Calu3 (cell line): ENCODE measurements at regions of chr18 and their contacts with region 1.

Region 1: GRCh38 chr18:32349728-32350395 is 120.8 kb downstream of the GAREM1 start:
- DNase-seq: peak; percentile 77
- H3K4me3 Mint-ChIP-seq: peak overlapping the region; percentile 56
- H3K27ac Mint-ChIP-seq: peak overlapping the region; percentile 90
- H3K4me1 Mint-ChIP-seq: peaks cover 44% of the 10 kb centered on the region
- H3K27me3 Mint-ChIP-seq: no peaks in the 10 kb centered on the region
- CTCF ChIP-seq: no peak

Region 2: DNA sequence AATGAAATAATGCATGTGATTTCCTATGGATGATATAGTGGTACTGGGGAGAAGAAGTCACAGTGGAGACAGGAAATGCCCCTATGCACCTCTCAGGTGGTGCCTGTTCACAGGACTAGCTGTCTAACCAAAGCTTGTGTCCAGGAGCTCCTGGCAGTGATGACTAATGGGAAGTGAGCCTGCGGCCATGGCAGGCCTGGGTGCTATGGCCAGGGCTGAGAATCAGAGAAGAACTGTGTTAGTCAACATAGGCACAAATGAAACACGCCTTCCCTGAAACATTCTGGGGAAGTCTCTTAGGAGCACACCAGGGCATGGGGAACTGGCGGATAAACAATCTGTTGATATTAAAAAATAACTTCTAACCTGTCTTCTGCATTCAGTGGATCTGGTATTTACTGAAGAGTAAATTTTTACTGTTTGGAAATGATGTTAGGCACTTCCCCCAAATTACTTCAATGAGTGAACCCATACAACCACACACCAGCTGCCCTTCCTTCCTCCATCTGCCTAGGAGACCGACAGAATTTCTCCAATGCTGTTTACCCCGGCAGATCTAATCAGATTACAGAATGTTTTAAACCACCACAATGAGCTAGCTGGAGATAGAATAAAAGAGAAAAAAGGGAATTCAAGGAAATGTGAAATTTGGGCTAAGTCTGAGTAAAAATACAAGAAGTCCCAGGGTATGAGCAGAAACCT is 92.6 kb before region 1 on chr18:
- CTCF ChIA-PET with region 1: no interaction called
- intact Hi-C with region 1: no loop called
- DNase-seq: no peak
- H3K4me3 Mint-ChIP-seq: no peak overlapping the region
- H3K27ac Mint-ChIP-seq: no peak overlapping the region
- H3K4me1 Mint-ChIP-seq: no peaks in the 10 kb centered on the region
- H3K27me3 Mint-ChIP-seq: no peaks in the 10 kb centered on the region
- CTCF ChIP-seq: no peak

Region 3: GRCh38 chr18:32301976-32302743 is 47.7 kb before region 1 on chr18:
- CTCF ChIA-PET with region 1: no interaction called
- intact Hi-C with region 1: loop called (anchors 5 kb)
- DNase-seq: peak; percentile 40
- H3K4me3 Mint-ChIP-seq: no peak overlapping the region
- H3K27ac Mint-ChIP-seq: peak overlapping the region; percentile 73
- H3K4me1 Mint-ChIP-seq: peaks cover 19% of the 10 kb centered on the region
- H3K27me3 Mint-ChIP-seq: no peaks in the 10 kb centered on the region
- CTCF ChIP-seq: no peak

Region 4: GRCh38 chr18:32366586-32367538 is 17.0 kb after region 1 on chr18:
- CTCF ChIA-PET with region 1: interaction called, 8 read pairs
- intact Hi-C with region 1: loop called (anchors 1 kb)
- DNase-seq: peak; percentile 49
- H3K4me3 Mint-ChIP-seq: peak overlapping the region; percentile 18
- H3K27ac Mint-ChIP-seq: peak overlapping the region; percentile 72
- H3K4me1 Mint-ChIP-seq: peaks cover 62% of the 10 kb centered on the region
- H3K27me3 Mint-ChIP-seq: no peaks in the 10 kb centered on the region
- CTCF ChIP-seq: no peak